Dendritic cell treated with granulocyte-macrophage colony-stimulating factor and Interleukin-4, amounts not matched to agents 40 ng/mL and 50 ng/mL, for 4 days (primary cell): ENCODE measurements at regions of chr18 and their contacts with region 1.

Region 1: DNA sequence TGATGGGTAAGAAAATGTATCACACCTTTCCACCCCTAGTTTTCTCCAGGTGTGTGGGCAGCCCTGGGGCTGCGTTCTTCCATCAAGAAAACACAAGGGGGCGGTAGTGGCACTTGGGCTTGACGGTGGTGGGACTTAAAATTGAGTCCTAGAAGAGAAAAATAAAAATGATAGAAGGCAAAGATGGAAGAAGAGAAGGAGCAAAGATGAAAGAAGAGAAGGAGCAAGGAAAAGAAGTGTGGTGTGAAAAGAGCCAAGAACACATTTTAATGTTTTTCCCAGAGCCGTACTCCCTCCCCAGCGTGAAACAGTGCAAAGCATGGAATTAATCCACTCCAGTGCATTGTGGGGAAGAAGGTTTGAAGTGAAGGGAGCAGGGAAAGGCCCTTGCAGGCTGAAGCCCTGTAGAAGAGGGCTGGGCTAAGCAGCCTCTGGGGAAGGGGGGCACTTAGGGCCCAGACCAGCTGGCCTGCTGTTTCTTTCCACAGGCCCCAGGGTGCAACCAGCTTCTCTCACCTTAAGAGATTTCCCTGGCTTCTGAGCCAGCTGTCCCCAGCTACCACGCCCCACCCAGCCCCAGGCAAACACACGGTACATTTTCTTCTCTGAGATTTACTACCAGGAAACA is 256.8 kb downstream of the RNF152 start:
- H3K4me3 Mint-ChIP-seq: no peak overlapping the region
- H3K27ac Mint-ChIP-seq: no peak overlapping the region
- H3K4me1 Mint-ChIP-seq: no peaks in the 10 kb centered on the region
- H3K27me3 Mint-ChIP-seq: peaks cover 10% of the 10 kb centered on the region

Region 2: GRCh38 chr18:61322265-61322873 is 313.6 kb before region 1 on chr18:
- intact Hi-C with region 1: no loop called
- H3K4me3 Mint-ChIP-seq: no peak overlapping the region
- H3K27ac Mint-ChIP-seq: no peak overlapping the region
- H3K4me1 Mint-ChIP-seq: no peaks in the 10 kb centered on the region
- H3K27me3 Mint-ChIP-seq: peaks cover 1% of the 10 kb centered on the region

Region 3: GRCh38 chr18:61901323-61901986 is 265.4 kb after region 1 on chr18:
- intact Hi-C with region 1: loop called (anchors 1 kb)
- H3K4me3 Mint-ChIP-seq: no peak overlapping the region
- H3K27ac Mint-ChIP-seq: no peak overlapping the region
- H3K4me1 Mint-ChIP-seq: no peaks in the 10 kb centered on the region
- H3K27me3 Mint-ChIP-seq: peaks cover 59% of the 10 kb centered on the region

Region 4: DNA sequence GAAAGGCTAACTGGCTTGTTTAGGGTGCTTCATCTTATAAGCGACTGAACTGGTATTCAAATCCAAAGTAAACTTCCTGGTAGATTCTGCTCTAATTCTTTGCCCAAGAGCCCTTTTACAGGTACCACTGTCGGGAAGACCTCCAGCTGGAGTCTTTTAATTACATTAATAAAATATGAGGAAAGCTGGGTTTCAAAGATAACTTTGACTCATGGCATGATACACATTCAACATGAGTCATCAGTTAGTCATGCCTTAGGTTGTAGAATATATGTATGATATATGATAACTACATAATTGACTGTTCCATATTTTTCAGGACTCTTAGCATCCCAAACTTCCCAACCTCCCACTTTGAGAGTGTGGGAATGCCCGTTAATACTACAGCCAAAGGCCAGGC is 919.1 kb after region 1 on chr18:
- intact Hi-C with region 1: no loop called
- H3K4me3 Mint-ChIP-seq: no peak overlapping the region
- H3K27ac Mint-ChIP-seq: no peak overlapping the region
- H3K4me1 Mint-ChIP-seq: peaks cover 11% of the 10 kb centered on the region
- H3K27me3 Mint-ChIP-seq: no peaks in the 10 kb centered on the region